ENCODE measurements at regions of chrX and their contacts with region 1.

Region 1: GRCh38 chrX:109812236-109812635 is 79.2 kb upstream of the ACSL4 start:
- DNase-seq: no peak
- ATAC-seq: no peak
- H3K4me3 ChIP-seq: no peak overlapping the region
- H3K27ac ChIP-seq: no peak overlapping the region
- H3K4me1 ChIP-seq: no peaks in the 10 kb centered on the region
- H3K27me3 ChIP-seq: peaks cover 0 to 31% (median 0%) of the 10 kb centered on the region in 7 donors
- CTCF ChIP-seq: no peak

Region 2: DNA sequence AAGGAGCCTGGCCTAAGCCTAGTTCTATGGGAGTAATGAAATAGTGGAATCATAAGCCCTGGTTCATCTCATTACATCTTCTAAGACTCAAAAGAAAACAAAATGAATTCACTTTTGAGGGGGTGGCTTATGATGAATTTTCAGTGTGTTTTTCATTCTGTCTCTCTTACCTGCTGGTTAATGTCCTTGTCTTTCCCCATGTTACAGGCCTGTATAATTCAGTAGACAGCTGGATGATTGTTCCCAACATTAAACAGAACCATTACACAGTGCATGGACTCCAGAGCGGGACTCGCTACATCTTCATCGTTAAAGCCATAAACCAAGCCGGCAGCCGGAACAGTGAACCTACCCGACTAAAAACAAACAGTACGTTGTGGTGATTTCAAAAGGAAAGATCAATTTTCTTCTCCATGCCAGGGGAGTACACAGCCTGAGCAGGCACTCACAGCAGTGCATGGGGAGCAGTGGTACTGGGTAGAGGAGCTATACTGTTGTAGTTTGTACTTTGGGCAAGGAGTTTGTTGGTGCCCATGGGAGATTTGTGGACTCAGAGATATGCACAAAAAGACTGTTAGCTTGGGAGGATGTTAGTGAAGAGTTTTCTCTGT is 1888.0 kb before region 1 on chrX:
- intact Hi-C with region 1: loop called in 1 of 10 experiments (anchors 5 kb)
- DNase-seq: no peak
- ATAC-seq: no peak
- H3K4me3 ChIP-seq: no peak overlapping the region
- H3K27ac ChIP-seq: no peak overlapping the region
- H3K4me1 ChIP-seq: no peaks in the 10 kb centered on the region
- H3K27me3 ChIP-seq: peaks cover 0 to 56% (median 0%) of the 10 kb centered on the region in 7 donors
- CTCF ChIP-seq: no peak